OCI-LY7 (cell line): ENCODE measurements at regions of chr19 and their contacts with region 1.

Region 1: GRCh38 chr19:45092747-45093678 is at the start of gene PPP1R37:
- DNase-seq: peak; percentile 99
- H3K4me3 ChIP-seq: peak within 1 kb of the TSS; percentile 92
- H3K27ac ChIP-seq: peak within 1 kb of the TSS; percentile 71
- H3K4me1 ChIP-seq: peaks cover 34% of the 10 kb centered on the region
- CTCF ChIP-seq: peak; percentile 55; the same call in 1 of the 2 replicates
- total RNA-seq, gene PPP1R37: 35.5 and 48.6 TPM in 2 replicates

Region 2: GRCh38 chr19:44820648-44821609 is 272.1 kb before region 1 on chr19:
- CTCF ChIA-PET with region 1: no interaction called
- POLR2A ChIA-PET with region 1: no interaction called
- intact Hi-C with region 1: no loop called
- DNase-seq: no peak
- H3K4me3 ChIP-seq: no peak overlapping the region
- H3K27ac ChIP-seq: no peak overlapping the region
- H3K4me1 ChIP-seq: no peaks in the 10 kb centered on the region
- CTCF ChIP-seq: no peak

Region 3: GRCh38 chr19:45117669-45118068 is 24.7 kb after region 1 on chr19:
- CTCF ChIA-PET with region 1: no interaction called
- POLR2A ChIA-PET with region 1: no interaction called
- intact Hi-C with region 1: loop called (anchors 1 kb)
- DNase-seq: no peak
- H3K4me3 ChIP-seq: no peak overlapping the region
- H3K27ac ChIP-seq: peak overlapping the region; percentile 66
- H3K4me1 ChIP-seq: peaks cover 55% of the 10 kb centered on the region
- CTCF ChIP-seq: no peak

Region 4: DNA sequence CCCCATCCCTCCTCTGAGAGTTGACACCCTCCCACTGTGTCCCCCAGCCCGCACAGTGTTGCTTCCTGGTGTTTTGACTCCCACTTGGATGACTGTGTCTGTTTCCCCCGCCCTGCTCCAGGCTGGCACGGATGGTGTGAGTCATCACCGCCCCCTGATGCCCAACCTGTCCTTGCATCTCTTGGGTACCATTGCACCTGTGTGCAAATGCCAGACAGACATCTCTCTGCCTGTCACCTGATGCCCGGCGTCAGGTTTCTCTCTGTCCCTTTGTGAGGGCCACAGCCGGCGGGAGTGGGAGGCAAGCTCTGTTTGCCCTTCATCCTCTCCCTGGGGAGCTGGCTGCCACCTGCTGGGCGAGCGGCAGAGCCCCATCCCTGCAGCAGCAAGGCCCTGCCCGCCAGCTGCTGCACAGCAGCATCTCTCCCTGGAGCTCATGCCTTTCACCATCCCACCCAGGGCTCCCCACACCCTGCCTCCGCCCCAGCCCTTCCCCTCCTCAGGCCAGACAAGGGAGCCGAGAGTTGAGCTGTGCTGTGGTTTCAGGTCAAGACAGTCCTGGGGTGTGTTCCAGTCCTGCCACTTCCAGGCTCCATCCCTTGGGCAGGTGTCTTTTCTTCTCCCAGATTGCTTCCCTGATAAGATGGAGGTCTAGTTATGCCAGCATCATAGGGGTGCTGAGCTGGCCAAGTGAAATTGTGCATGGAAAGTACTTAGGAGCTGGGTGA is 38.0 kb after region 1 on chr19:
- CTCF ChIA-PET with region 1: interaction called, 3 read pairs
- POLR2A ChIA-PET with region 1: interaction called, 5 read pairs
- intact Hi-C with region 1: loop called (anchors 2 kb)
- DNase-seq: peak; percentile 89
- H3K4me3 ChIP-seq: peak overlapping the region; percentile 9
- H3K27ac ChIP-seq: peak overlapping the region; percentile 46
- H3K4me1 ChIP-seq: peaks cover 76% of the 10 kb centered on the region
- CTCF ChIP-seq: peak; percentile 82

Region 5: GRCh38 chr19:45178262-45179071 is 85.5 kb after region 1 on chr19 and contains the start of gene BLOC1S3:
- CTCF ChIA-PET with region 1: no interaction called
- POLR2A ChIA-PET with region 1: interaction called, 3 read pairs
- intact Hi-C with region 1: loop called (anchors 5 kb)
- DNase-seq: peak; percentile 100
- H3K4me3 ChIP-seq: peak within 1 kb of the TSS; percentile 88
- H3K27ac ChIP-seq: peak within 1 kb of the TSS; percentile 66
- H3K4me1 ChIP-seq: peaks cover 25% of the 10 kb centered on the region
- CTCF ChIP-seq: peak; percentile 63
- total RNA-seq, gene BLOC1S3: 8.1 and 9.7 TPM in 2 replicates